Left lung (tissue), 14 donors: ENCODE measurements at regions of chrX and their contacts with region 1.

Region 1: GRCh38 chrX:103533511-103534216 is 14.4 kb upstream of the RAB40A start:
- DNase-seq: peak in 3 of 4 donors; percentile 61 to 77 (median 63)
- ATAC-seq: peak; percentile 90
- H3K4me3 ChIP-seq: peak overlapping the region in 1 of 2 donors; percentile 16
- H3K27ac ChIP-seq: peak overlapping the region in 1 of 2 donors; percentile 57
- H3K4me1 ChIP-seq: no peaks in the 10 kb centered on the region
- H3K27me3 ChIP-seq: peaks cover 0 to 3% of the 10 kb centered on the region in 2 donors
- CTCF ChIP-seq: peak; percentile 78 to 85

Region 2: DNA sequence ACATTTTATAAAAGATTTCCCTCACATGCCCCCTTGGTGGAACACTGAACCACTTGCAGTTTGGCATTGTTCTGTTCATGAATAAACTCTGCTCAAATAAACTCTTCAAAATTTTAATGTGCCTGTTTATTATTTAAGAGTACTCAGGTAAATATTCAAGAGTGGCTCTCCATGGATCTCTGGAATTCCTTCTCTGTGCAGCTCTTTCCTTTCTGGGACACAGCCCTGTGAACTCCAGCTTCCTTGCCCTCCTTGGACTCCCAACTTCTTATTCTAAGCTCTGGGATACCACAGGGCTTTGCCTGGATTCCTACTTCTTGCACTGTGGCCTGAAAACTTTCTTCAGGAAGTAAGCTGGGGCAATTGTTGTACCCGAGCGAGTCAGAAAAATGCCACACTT is 149.0 kb before region 1 on chrX:
- intact Hi-C with region 1: no loop called
- DNase-seq: no peak
- ATAC-seq: peak; percentile 78
- H3K4me3 ChIP-seq: no peak overlapping the region
- H3K27ac ChIP-seq: no peak overlapping the region
- H3K4me1 ChIP-seq: no peaks in the 10 kb centered on the region
- H3K27me3 ChIP-seq: peaks cover 0 to 7% of the 10 kb centered on the region in 2 donors
- CTCF ChIP-seq: no peak

Region 3: DNA sequence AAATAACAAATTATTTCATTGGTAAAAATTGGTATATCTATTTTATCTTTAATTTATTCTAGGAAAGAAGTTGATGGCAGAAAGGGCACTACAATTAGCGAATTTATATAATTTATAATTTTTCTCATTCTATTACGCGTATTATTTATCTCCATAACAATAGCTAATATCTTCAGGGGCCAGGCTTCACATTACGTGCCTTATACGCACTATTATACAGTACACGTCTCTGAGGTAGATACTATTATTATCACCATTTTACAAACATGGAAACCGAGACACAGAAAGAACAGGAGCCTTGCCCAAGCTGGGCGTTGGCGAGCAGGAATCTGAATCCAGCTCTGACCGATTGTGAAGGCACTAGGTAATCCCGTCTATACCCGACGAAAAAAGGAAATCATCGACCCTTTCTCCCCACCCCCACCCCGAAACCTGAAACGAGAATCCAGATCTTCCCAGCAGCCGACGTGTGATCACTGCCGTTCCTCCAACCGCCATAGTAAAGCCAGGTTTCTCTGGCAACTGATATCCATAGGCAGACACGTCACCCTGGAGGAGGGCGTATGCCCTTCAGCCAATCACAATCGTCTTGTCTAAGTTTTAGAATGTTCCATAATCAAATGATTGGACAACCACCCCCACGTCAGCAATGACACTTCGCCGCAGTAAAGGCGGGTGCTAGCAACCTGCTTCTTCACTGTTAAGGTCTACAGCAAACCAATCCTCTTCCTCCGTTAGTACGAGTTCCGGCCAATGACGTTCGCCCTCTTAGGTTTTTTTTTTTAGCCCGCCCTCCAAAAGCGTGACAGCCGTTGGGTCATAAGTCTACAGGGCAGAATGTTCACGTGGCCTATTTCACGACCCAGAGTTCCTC is 152.8 kb after region 1 on chrX and contains the start of gene MORF4L2:
- intact Hi-C with region 1: loop called in 1 of 2 experiments (anchors 10 kb)
- DNase-seq: peak; percentile 82 to 96 (median 92)
- ATAC-seq: peak; percentile 86
- H3K4me3 ChIP-seq: peak within 1 kb of the TSS; percentile 34 to 53
- H3K27ac ChIP-seq: peak within 1 kb of the TSS; percentile 94 to 96
- H3K4me1 ChIP-seq: peaks cover 0 to 9% of the 10 kb centered on the region in 2 donors
- H3K27me3 ChIP-seq: peaks cover 0 to 3% of the 10 kb centered on the region in 2 donors
- CTCF ChIP-seq: no peak
- polyA plus RNA-seq, gene MORF4L2: 274 to 340 (median 312) TPM

Region 4: GRCh38 chrX:103742339-103742738 is 208.7 kb after region 1 on chrX:
- intact Hi-C with region 1: no loop called
- DNase-seq: no peak
- ATAC-seq: no peak
- H3K4me3 ChIP-seq: no peak overlapping the region
- H3K27ac ChIP-seq: no peak overlapping the region
- H3K4me1 ChIP-seq: no peaks in the 10 kb centered on the region
- H3K27me3 ChIP-seq: no peaks in the 10 kb centered on the region
- CTCF ChIP-seq: no peak